Activated T-helper 2 cell treated with anti-CD3 and anti-CD28 coated beads, Interferon-gamma antibody, Interleukin-2, Interleukin-4, amounts not matched to agents 10 μg/mL and 5 μg/mL and 100 μg/mL, durations not matched to agents 14 hours and 24 hours and 36 hours (primary cell): ENCODE measurements at regions of chr17 and their contacts with region 1.

Region 1: DNA sequence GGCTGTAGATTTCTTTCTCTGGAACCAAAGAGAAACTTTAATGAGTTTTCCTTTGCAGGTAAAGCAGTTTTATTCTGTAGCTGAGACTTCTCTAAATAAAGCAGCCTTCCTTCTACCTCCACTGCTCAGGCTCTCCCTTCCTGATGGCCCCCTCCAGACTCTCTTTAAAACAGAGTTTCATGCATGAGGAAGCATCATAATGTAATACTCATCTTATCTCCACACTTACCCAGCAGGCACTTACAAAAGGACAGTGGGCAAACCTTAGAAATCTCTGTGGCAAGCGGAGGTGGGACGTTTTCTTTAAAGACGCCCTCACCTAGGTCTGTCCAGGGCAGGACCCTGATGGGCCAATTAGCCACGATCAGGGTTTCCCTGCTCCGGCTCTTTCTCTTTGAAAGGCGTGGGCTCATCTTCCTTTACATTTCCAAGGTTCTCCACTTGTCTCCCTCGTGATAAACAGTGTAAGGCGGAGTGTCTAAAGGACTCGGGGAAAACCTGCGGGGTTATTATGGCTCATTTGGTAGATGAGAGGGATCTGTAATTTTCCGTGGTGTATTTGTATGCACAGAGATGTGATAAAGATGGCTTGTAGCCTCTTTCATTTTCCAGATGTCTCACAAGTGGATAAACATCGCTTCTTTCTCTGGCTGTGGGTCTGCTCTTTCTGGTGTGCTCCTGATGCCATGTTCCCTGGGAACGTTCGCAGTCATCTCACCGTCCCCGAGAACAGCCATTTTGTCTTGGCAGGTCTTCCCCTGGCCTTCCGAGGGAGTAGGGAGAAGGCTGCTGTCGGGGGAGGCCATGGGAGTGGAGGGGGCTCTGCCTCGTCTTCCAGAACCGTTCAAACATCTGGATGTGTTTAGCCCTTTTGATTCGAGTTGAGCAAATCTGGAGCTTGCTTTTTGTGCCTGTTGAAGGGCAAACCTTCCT is 239.0 kb downstream of the CCDC182 start:
- DNase-seq: no peak
- H3K4me3 Mint-ChIP-seq: no peak overlapping the region
- H3K27ac Mint-ChIP-seq: no peak overlapping the region
- H3K4me1 Mint-ChIP-seq: peaks cover 22% of the 10 kb centered on the region
- H3K27me3 Mint-ChIP-seq: no peaks in the 10 kb centered on the region

Region 2: DNA sequence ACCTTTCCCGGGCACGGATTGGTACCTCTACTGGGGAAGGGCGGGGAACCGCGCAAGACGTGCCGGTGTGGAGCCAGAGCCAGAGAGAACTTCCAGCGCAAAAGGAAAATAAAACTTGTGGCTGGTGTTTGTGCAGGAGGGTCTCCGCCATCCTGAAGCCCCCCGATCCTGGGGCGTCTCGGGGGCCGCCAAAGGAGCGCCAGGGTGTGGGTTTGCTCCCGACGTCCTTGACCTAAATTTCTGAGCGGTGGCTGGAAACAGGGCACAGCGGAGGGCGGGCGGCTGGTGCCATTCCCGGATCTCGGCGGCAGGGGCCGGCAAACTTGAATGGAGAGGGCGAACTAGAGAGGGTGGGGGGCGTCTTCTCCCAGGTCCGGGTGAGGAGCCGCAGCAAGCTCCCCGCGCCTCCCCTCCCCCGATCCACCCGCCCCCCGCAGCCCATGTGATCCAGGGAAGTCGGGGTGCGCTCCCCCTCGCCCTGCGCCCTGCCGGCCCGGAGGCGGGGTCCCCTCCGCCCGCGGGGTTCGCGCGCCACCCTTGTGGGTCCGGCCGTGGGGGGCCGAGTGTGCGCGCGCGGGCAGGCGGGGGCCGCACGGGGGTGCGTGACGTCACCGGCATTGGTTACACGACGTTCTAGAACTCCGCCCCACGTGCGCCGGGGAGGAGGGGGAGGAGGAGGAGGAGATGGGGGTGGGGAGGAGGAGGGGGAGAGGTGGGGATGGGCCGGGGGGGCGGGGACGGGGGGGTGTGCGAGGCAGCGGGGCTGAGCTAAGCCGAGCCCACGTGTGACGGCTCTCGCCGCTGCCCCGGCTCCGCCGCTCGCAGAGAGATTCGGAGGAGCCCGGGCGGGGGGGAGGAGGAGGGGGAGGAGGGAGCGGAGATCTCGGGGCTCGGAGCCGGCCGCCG is 250.1 kb before region 1 on chr17 and contains the start of gene MSI2:
- intact Hi-C with region 1: loop called (anchors 5 kb)
- DNase-seq: peak; percentile 82
- H3K4me3 Mint-ChIP-seq: peak within 1 kb of the TSS; percentile 97
- H3K27ac Mint-ChIP-seq: peak within 1 kb of the TSS; percentile 88
- H3K4me1 Mint-ChIP-seq: peaks cover 41% of the 10 kb centered on the region
- H3K27me3 Mint-ChIP-seq: peaks cover 2% of the 10 kb centered on the region
- total RNA-seq, gene MSI2: 181 and 198 TPM in 2 replicates

Region 3: GRCh38 chr17:57518587-57519581 is 12.8 kb after region 1 on chr17:
- intact Hi-C with region 1: no loop called
- DNase-seq: no peak
- H3K4me3 Mint-ChIP-seq: no peak overlapping the region
- H3K27ac Mint-ChIP-seq: no peak overlapping the region
- H3K4me1 Mint-ChIP-seq: peaks cover 18% of the 10 kb centered on the region
- H3K27me3 Mint-ChIP-seq: no peaks in the 10 kb centered on the region

Region 4: GRCh38 chr17:57685505-57686132 is 179.5 kb after region 1 on chr17:
- intact Hi-C with region 1: no loop called
- DNase-seq: no peak
- H3K4me3 Mint-ChIP-seq: no peak overlapping the region
- H3K27ac Mint-ChIP-seq: no peak overlapping the region
- H3K4me1 Mint-ChIP-seq: no peaks in the 10 kb centered on the region
- H3K27me3 Mint-ChIP-seq: peaks cover 8% of the 10 kb centered on the region